Sigmoid colon (tissue), 7 donors: ENCODE measurements at regions of chr10 and their contacts with region 1.

Region 1: GRCh38 chr10:122298598-122299301 is 27.7 kb downstream of the BTBD16 start:
- DNase-seq: peak; percentile 89
- H3K4me3 ChIP-seq: peak overlapping the region in 3 of 4 donors; percentile 18 to 25 (median 22)
- H3K27ac ChIP-seq: no peak overlapping the region
- H3K4me1 ChIP-seq: peaks cover 0 to 26% (median 11%) of the 10 kb centered on the region in 4 donors
- H3K27me3 ChIP-seq: no peaks in the 10 kb centered on the region
- CTCF ChIP-seq: peak; percentile 87 to 91 (median 87)
- EP300 ChIP-seq: no peak
- POLR2A ChIP-seq: no peak

Region 2: DNA sequence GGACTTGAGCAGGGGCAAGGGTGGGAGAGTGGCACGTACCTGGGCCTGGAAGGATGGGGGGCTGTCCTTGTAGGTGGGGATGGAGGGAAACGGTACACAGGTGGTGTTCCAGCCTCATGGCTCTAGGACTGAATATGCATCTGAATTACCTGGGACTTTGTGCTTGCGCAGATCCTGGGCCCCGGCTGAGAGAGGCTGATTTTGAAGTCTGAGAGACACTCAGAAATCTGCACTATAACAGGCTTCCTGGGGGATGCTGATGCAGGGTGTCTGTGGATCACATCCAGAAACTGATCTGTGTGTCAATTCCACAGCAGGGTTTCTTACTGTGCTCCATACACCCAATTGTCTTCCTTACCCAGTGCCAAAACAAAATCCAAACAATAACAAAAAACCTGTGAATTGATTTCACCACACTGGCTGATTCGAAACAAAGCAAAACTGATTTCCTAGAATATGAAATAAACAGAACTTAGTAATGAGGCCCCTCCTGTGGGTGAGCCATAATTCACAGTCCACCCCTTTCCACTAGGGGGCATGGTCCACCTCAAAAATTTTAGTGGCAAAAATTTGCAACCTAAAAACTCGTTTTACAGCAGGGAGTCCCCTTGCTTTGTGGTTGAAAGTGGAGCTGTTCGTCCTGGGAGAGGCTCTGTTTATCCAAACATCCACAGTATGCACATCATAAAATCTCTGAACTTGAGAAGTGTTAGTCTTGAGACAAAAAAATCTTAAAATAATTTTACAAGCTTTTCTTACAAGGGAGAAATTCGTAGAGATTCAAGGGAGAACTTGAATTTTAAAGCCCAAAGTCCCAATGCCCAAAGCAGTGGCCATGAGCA is 43.8 kb after region 1 on chr10:
- intact Hi-C with region 1: loop called (anchors 2 kb)
- DNase-seq: no peak
- H3K4me3 ChIP-seq: no peak overlapping the region
- H3K27ac ChIP-seq: peak overlapping the region; percentile 51 to 87 (median 75)
- H3K4me1 ChIP-seq: peaks cover 0 to 55% (median 37%) of the 10 kb centered on the region in 4 donors
- H3K27me3 ChIP-seq: no peaks in the 10 kb centered on the region
- CTCF ChIP-seq: peak; percentile 51 to 78 (median 72)
- EP300 ChIP-seq: no peak
- POLR2A ChIP-seq: no peak

Region 3: DNA sequence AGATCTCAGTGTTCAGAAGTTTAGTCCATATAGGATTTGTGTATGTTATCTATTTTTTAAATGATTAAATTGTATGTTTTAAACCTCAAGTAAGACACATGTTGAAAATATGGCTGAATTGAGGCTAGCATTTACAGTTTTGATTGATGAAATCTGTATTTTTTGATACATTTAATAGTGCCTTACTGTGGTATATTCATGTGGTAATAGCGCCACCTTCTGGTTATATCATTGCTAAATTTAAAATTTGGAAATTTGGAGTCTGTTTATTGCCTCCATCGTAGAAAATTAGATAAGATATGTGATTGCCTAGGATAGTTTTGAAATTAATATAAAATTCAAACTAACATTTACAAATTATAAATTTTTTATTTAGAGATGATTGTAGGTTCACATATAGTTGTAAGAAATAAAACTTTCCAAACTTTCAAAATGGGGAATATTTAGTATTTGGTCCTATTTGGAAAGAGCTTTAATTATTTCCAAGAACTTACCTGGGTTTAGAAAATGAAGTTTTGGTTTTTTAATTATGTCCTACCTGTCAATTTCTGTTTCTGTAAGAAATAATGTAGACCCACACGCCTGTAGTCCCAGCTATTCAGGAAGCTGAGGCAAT is 136.6 kb after region 1 on chr10:
- intact Hi-C with region 1: loop called (anchors 1 kb)
- DNase-seq: no peak
- H3K4me3 ChIP-seq: no peak overlapping the region
- H3K27ac ChIP-seq: peak overlapping the region in 1 of 4 donors; percentile 13
- H3K4me1 ChIP-seq: no peaks in the 10 kb centered on the region
- H3K27me3 ChIP-seq: no peaks in the 10 kb centered on the region
- CTCF ChIP-seq: peak; percentile 50 to 68 (median 60)
- EP300 ChIP-seq: no peak
- POLR2A ChIP-seq: no peak

Region 4: DNA sequence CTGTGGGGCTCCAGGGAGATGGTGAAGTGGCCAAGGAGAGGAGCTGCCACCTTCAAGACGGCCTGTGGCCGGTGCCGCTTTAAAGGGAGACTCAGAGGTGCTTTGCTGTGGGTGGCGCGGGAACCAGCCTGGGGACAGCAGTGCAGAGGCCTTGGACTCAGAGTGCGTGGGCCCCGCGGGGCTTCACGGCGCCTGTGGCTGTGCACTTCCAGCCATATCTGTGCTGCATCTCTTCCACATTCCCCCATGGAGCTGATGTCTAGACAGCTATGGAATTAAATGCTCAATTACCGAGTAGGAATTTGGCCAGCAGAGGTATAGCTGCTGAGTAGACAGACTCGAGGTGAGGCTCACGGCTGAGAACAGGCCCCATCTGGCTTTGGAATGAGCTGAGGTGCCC is 204.3 kb after region 1 on chr10:
- intact Hi-C with region 1: loop called (anchors 5 kb)
- DNase-seq: no peak
- H3K4me3 ChIP-seq: no peak overlapping the region
- H3K27ac ChIP-seq: peak overlapping the region in 2 of 4 donors; percentile 81 to 85
- H3K4me1 ChIP-seq: peaks cover 0 to 51% (median 47%) of the 10 kb centered on the region in 4 donors
- H3K27me3 ChIP-seq: no peaks in the 10 kb centered on the region
- CTCF ChIP-seq: no peak
- EP300 ChIP-seq: no peak
- POLR2A ChIP-seq: no peak

Region 5: DNA sequence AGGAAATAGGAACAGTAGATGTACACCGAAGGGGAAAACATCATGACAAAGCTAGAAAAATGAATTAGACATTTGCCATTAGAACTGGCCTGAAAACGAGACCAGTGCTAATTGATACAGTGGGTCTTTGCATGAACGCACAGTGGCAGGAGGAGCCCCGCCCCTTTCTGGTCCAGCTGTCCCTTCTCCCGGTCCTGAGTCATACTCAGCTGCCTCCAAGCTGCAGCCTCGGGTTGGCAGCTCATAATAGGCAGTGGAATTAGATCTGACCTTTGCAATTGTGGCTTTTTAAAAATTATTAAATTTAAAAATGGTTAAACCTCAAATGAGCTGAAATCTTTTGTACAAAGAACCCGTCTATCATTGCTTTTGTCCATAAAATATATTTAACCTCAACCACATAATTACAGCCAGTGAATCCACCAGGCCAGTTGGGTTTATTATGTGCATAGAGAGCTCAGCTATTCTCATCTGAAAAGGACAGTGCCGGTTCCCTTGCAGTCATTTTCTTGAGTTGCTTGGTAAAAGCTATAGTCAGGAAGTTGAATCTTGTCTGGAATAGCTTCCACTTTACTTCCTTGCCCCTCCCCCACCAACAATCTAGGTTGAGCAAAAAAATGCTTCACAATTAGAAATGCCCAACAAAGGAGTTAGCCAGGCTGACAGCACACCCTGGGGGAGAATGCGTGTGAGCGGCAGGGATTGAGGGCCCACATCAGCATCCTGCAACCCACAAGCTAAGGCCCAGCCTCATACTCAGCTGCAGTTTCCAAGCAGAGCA is 1002.5 kb after region 1 on chr10:
- intact Hi-C with region 1: no loop called
- DNase-seq: no peak
- H3K4me3 ChIP-seq: no peak overlapping the region
- H3K27ac ChIP-seq: peak overlapping the region in 1 of 4 donors; percentile 25
- H3K4me1 ChIP-seq: no peaks in the 10 kb centered on the region
- H3K27me3 ChIP-seq: no peaks in the 10 kb centered on the region
- CTCF ChIP-seq: no peak
- EP300 ChIP-seq: no peak
- POLR2A ChIP-seq: no peak